Endothelial cell of umbilical vein (primary cell): ENCODE measurements at regions of chr12 and their contacts with region 1.

Region 1: GRCh38 chr12:86712425-86712843 is 456.2 kb upstream of the MGAT4C start:
- DNase-seq: peak; percentile 96
- H3K4me3 ChIP-seq: no peak overlapping the region
- H3K27ac ChIP-seq: peak overlapping the region; percentile 87
- H3K4me1 ChIP-seq: peaks cover 13% of the 10 kb centered on the region
- H3K27me3 ChIP-seq: no peaks in the 10 kb centered on the region
- CTCF ChIP-seq: no peak
- POLR2A ChIP-seq: peak; percentile 47

Region 2: DNA sequence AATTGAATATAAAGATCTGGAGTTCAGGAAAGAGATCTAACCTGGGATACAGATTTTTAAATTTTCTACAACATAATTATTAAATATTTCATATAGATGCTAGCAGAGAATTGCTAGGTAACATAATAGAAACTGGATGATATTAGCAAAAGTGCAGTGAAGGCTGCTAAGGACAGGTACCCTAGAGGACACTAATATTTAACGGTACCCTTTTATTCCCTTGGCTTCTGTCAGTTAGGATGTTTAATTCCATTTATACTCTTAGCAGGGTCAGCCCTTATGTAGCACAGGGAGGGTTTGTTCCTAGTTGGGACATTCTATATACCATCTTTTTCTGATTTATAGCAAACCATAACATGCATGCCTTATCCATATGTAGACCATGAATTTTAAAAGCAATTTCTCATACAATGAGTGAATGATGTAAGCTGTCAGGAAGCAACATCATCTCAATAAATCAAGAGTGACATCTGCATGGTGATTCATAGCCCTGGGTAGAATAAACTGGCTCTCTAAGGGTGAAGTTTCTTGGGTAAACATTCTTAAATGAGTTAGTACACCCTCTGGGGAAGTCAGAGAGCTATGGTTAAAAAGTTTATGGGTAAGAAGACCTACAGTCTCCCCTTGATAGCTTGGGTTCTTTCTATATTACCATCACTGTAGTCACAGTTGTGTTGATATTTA is 51.8 kb before region 1 on chr12:
- CTCF ChIA-PET with region 1: no interaction called
- POLR2A ChIA-PET with region 1: no interaction called
- dilution Hi-C with region 1: no loop called
- intact Hi-C with region 1: loop called (anchors 5 kb)
- DNase-seq: peak; percentile 85
- H3K4me3 ChIP-seq: no peak overlapping the region
- H3K27ac ChIP-seq: no peak overlapping the region
- H3K4me1 ChIP-seq: peaks cover 5% of the 10 kb centered on the region
- H3K27me3 ChIP-seq: no peaks in the 10 kb centered on the region
- CTCF ChIP-seq: no peak
- POLR2A ChIP-seq: no peak

Region 3: GRCh38 chr12:86683568-86684304 is 28.7 kb before region 1 on chr12:
- CTCF ChIA-PET with region 1: no interaction called
- POLR2A ChIA-PET with region 1: no interaction called
- dilution Hi-C with region 1: no loop called
- intact Hi-C with region 1: no loop called
- DNase-seq: no peak
- H3K4me3 ChIP-seq: no peak overlapping the region
- H3K27ac ChIP-seq: no peak overlapping the region
- H3K4me1 ChIP-seq: no peaks in the 10 kb centered on the region
- H3K27me3 ChIP-seq: no peaks in the 10 kb centered on the region
- CTCF ChIP-seq: no peak
- POLR2A ChIP-seq: no peak

Region 4: GRCh38 chr12:86727151-86727550 is 14.7 kb after region 1 on chr12:
- CTCF ChIA-PET with region 1: interaction called, 6 read pairs
- POLR2A ChIA-PET with region 1: no interaction called
- dilution Hi-C with region 1: no loop called
- intact Hi-C with region 1: loop called (anchors 2 kb)
- DNase-seq: peak; percentile 87
- H3K4me3 ChIP-seq: no peak overlapping the region
- H3K27ac ChIP-seq: peak overlapping the region; percentile 3
- H3K4me1 ChIP-seq: peaks cover 8% of the 10 kb centered on the region
- H3K27me3 ChIP-seq: no peaks in the 10 kb centered on the region
- CTCF ChIP-seq: no peak
- POLR2A ChIP-seq: no peak

Region 5: DNA sequence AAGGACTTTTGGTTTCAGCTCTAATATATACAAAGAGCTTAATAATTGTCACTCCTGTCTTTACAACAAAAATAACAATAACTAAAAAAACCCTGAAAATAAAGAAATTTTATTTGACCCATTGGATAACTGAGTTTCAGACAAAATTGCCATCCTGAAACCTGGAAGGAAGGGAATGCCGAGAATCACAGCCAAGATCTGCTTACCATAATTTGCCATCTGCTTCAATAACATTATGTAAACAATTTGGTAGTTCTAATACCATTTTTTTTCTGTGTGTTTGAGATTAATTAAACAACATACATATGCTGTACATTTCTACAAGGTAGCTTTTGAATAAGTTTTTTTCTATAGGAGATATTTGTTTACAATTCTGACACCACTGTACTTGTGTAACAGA is 140.0 kb after region 1 on chr12:
- CTCF ChIA-PET with region 1: no interaction called
- POLR2A ChIA-PET with region 1: no interaction called
- dilution Hi-C with region 1: no loop called
- intact Hi-C with region 1: no loop called
- DNase-seq: no peak
- H3K4me3 ChIP-seq: no peak overlapping the region
- H3K27ac ChIP-seq: no peak overlapping the region
- H3K4me1 ChIP-seq: no peaks in the 10 kb centered on the region
- H3K27me3 ChIP-seq: no peaks in the 10 kb centered on the region
- CTCF ChIP-seq: no peak
- POLR2A ChIP-seq: no peak

Region 6: DNA sequence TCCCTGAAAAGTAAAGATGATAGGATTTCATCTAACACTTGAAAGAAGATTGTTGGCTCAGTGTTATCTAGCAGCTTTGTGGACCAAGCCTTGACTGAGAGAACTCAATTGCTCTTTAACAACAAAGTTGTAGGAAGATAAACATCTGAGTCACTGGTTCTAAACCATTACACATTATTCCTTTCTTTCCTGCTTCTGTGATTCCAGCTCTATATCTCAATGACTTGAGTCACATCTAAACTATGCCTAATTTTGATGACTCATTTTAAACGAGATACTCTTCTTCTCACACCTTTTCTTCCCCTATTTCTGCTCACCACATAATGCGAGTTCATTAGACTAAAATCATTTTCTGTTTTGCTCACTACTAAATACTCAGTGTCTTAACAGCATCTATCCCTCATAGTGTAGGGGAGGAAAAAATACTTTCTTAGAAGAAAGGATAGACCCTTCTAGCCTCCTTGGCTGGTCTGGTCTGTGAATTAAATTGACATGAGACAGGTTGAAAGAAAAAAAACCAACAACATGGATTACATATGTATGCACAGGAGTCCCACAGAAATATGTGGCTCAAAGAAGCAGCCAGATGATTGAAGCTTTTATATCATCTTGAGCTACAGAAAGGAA is 1115.3 kb after region 1 on chr12:
- CTCF ChIA-PET with region 1: no interaction called
- POLR2A ChIA-PET with region 1: no interaction called
- dilution Hi-C with region 1: no loop called
- intact Hi-C with region 1: loop called (anchors 2 kb)
- DNase-seq: peak; percentile 89
- H3K4me3 ChIP-seq: peak overlapping the region in 1 of 3 experiments; percentile 18
- H3K27ac ChIP-seq: peak overlapping the region; percentile 83
- H3K4me1 ChIP-seq: peaks cover 25% of the 10 kb centered on the region
- H3K27me3 ChIP-seq: no peaks in the 10 kb centered on the region
- CTCF ChIP-seq: no peak
- POLR2A ChIP-seq: no peak